ENCODE measurements at regions of chr13 and their contacts with region 1.

Region 1: DNA sequence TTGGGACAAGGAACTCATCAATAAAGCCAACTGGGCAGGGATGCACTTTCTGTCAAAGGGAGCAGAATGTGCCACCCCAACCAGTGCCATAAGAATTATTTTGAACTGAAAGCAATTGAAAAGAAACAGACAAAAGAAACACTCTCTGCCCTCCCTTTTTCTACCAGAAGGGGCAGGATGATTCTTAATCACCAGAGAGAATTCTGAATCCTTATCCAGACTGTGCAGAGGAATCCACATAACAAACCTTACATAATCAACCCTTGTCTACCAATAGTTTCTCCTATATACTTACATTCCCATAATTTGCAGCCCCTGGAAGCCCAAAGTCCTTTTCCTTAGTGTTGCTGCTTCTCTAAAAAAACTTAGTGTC is 520.7 kb upstream of the NBEA start:
- DNase-seq: no peak
- H3K4me3 ChIP-seq: no peak overlapping the region
- H3K27ac ChIP-seq: no peak overlapping the region
- H3K4me1 ChIP-seq: no peaks in the 10 kb centered on the region
- H3K27me3 ChIP-seq: no peaks in the 10 kb centered on the region
- CTCF ChIP-seq: no peak
- POLR2A ChIP-seq: no peak

Region 2: GRCh38 chr13:34458756-34459715 is 37.7 kb after region 1 on chr13:
- intact Hi-C with region 1: loop called (anchors 5 kb)
- DNase-seq: no peak
- H3K4me3 ChIP-seq: no peak overlapping the region
- H3K27ac ChIP-seq: no peak overlapping the region
- H3K4me1 ChIP-seq: no peaks in the 10 kb centered on the region
- H3K27me3 ChIP-seq: no peaks in the 10 kb centered on the region
- CTCF ChIP-seq: no peak
- POLR2A ChIP-seq: no peak

Region 3: DNA sequence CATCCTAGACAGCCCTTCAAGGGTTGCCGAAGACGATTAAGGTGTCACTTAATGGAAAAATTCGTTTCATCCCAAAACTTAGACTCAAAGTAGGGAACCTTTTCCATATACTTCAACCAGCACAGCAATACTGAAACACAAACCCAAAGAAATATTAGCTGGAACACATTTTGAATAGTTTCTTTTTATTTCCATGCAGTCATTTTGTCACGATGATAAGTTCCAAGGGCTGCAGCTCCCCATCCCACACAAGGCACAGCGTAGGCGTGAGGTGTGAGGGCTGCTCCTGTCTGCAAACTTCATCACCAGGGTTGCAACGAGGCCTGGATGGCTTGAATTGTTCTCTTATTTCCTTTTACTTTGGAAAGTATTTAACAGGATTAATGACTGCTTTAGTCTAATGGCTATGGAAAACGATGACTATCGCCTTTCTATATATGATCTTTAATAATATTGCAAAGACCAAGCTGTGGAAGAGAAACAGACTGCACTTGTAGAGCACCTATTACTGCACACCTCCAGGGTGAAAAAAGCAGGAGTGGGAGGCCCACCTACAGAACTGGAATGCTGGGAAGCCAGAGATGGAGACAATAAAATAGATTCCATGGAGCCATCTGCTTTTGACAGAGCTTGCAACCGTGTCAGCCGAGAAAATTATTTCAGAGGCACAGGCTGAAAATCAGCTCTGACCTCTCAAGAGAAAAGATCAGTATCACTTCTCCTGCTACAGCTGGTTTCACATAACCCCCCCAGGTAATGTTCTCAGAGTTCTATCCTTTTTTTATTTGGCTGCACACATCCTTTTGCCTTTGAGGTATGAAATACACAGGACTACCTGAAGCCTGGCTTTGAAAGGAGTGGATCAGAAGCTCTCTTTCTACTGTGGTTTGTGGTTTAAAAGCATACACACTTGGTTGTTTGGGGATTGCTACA is 246.2 kb after region 1 on chr13:
- intact Hi-C with region 1: no loop called
- DNase-seq: no peak
- H3K4me3 ChIP-seq: no peak overlapping the region
- H3K27ac ChIP-seq: no peak overlapping the region
- H3K4me1 ChIP-seq: no peaks in the 10 kb centered on the region
- H3K27me3 ChIP-seq: no peaks in the 10 kb centered on the region
- CTCF ChIP-seq: no peak
- POLR2A ChIP-seq: no peak